SK-N-SH (cell line): ENCODE measurements at regions of chr5 and their contacts with region 1.

Region 1: DNA sequence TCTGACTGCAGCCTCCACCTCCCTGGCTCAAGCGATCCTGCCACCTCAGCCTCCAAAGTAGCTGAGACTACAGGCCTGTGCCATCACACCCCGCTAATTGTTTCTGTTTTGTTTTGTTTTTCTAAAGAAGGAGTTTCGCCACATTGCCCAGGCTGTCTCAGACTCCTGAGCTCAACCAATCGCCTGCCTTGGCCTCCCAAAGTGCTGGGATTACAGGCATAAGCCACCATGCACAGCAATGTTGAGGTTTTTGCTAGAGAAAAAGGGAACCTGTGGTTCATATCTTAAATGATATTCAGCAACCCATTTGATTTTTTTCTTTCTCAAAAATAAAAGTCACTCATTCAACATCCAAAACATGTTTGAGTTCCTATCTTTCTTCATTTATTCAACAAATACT is 20.4 kb upstream of the DELE1 start:
- DNase-seq: no peak
- H3K4me3 ChIP-seq: no peak overlapping the region
- H3K27ac ChIP-seq: no peak overlapping the region
- H3K4me1 ChIP-seq: peaks cover 0 to 12% of the 10 kb centered on the region in 2 experiments; a peak in 1 of 4 replicates
- H3K27me3 ChIP-seq: peaks cover 11% of the 10 kb centered on the region
- CTCF ChIP-seq: no peak
- EP300 ChIP-seq: no peak
- RAD21 ChIP-seq: no peak

Region 2: GRCh38 chr5:141889282-141889871 is 13.9 kb before region 1 on chr5:
- CTCF ChIA-PET with region 1: interaction called, 12 read pairs
- POLR2A ChIA-PET with region 1: interaction called, 4 read pairs
- DNase-seq: peak; percentile 38
- H3K4me3 ChIP-seq: no peak overlapping the region
- H3K27ac ChIP-seq: no peak overlapping the region
- H3K4me1 ChIP-seq: no peaks in the 10 kb centered on the region
- H3K27me3 ChIP-seq: peaks cover 10% of the 10 kb centered on the region; the same call in 1 of the 2 replicates
- CTCF ChIP-seq: peak; percentile 48
- EP300 ChIP-seq: no peak
- RAD21 ChIP-seq: peak; percentile 69

Region 3: DNA sequence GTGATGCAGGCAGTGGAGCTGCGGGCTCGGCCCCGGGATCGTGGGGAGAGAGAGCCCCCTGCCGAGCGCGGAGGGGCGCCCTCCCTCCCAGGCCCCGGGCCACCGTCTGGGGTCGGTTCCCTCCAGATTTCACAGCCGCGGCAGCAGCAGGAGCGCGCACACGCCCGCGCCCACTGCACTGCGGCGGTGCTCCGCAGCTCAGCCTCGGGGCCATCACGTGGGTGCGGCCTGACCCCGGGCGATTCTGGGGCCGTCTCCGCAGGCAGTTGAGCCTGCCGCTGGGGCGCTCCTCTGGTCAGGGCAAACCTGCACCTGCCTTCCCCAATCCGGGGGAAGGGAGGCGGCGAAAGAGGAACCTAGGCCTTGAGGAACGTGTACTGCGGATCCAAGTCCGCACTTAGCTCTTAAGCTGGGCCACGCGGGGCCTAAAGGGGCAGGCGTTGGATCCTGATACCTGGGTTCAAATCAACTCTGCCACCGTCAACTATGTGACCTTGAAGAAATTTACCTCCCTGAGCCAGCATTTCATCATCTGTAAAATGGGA is 11.0 kb after region 1 on chr5:
- CTCF ChIA-PET with region 1: interaction called, 30 read pairs
- POLR2A ChIA-PET with region 1: no interaction called
- DNase-seq: peak; percentile 94
- H3K4me3 ChIP-seq: peak overlapping the region in 1 of 2 experiments; percentile 4; a peak in 1 of 4 replicates
- H3K27ac ChIP-seq: no peak overlapping the region
- H3K4me1 ChIP-seq: peaks cover 0 to 4% of the 10 kb centered on the region in 2 experiments; a peak in 1 of 4 replicates
- H3K27me3 ChIP-seq: no peaks in the 10 kb centered on the region; the same call in 1 of the 2 replicates
- CTCF ChIP-seq: no peak
- EP300 ChIP-seq: no peak
- RAD21 ChIP-seq: peak; percentile 75

Region 4: GRCh38 chr5:141923448-141924352 is 20.4 kb after region 1 on chr5 and contains the start of gene DELE1:
- CTCF ChIA-PET with region 1: interaction called, 3 read pairs
- POLR2A ChIA-PET with region 1: interaction called, 10 read pairs
- DNase-seq: peak; percentile 95
- H3K4me3 ChIP-seq: peak within 1 kb of the TSS; percentile 87 to 96
- H3K27ac ChIP-seq: peak within 1 kb of the TSS; percentile 98 to 99
- H3K4me1 ChIP-seq: peaks cover 0 to 8% of the 10 kb centered on the region in 2 experiments; a peak in 2 of 4 replicates
- H3K27me3 ChIP-seq: no peaks in the 10 kb centered on the region
- CTCF ChIP-seq: no peak
- EP300 ChIP-seq: peak in 1 of 2 experiments; percentile 36; a peak in 1 of 4 replicates
- RAD21 ChIP-seq: no peak
- polyA plus RNA-seq, gene DELE1: 60.3 and 78.8 TPM in 2 replicates